ENCODE measurements at regions of chr3 and their contacts with region 1.

Region 1: GRCh38 chr3:195863121-195864006 is 45.0 kb downstream of the TNK2 start:
- DNase-seq: peak; percentile 88 to 95
- ATAC-seq: peak; percentile 86
- H3K4me3 ChIP-seq: peak overlapping the region in 1 of 4 donors; percentile 2
- H3K27ac ChIP-seq: peak overlapping the region; percentile 87 to 93 (median 90)
- H3K4me1 ChIP-seq: peaks cover 10 to 23% of the 10 kb centered on the region in 2 donors
- H3K27me3 ChIP-seq: no peaks in the 10 kb centered on the region
- CTCF ChIP-seq: peak; percentile 97 to 99 (median 98)
- POLR2A ChIP-seq: no peak

Region 2: DNA sequence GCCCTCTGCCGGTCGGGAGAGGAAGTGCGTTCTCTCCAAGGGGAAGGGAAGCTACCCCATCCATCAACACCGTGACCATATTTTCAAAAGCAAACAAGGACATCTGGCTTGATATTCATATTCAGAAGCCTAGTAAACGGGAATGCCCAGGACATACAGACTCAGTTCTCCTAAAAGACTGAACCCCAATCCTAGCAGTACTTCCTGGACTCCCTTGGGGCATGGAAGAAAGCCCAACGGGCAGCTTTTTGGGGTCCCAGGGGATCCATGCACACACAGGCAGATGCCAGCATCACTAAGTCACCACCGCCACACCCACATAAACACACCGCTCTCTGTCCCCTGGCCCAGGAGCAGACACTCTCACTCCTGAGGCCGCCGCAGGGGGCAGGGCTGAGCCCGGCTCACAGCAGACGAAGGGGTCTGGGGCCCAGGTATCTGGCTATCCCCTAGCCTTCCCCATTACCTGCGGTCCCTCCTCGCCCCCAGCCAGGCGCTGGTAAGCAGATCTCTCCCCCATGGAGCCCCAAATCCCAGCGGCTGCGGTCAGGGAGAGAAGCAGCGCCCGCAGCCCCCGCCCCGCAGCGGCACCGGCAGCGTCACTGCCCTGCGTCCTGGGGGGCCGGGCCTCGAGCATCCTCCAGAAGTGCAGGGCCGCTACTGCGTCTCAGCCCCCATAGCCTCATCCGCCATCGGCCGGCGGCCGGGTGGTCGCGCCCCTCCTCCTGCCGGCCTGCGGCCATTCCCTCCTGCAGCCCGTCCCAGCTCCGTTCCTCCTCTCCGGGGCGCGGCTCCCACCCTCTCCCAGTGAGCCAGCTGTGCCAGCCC is 31.6 kb after region 1 on chr3:
- in situ Hi-C with region 1: loop called (anchors 5 kb)
- intact Hi-C with region 1: loop called (anchors 1 kb)
- DNase-seq: peak in 1 of 2 donors; percentile 73
- ATAC-seq: peak; percentile 33 to 49
- H3K4me3 ChIP-seq: peak overlapping the region; percentile 73 to 89 (median 78)
- H3K27ac ChIP-seq: peak overlapping the region; percentile 91 to 99 (median 92)
- H3K4me1 ChIP-seq: peaks cover 71 to 87% of the 10 kb centered on the region in 2 donors
- H3K27me3 ChIP-seq: no peaks in the 10 kb centered on the region
- CTCF ChIP-seq: peak; percentile 94 to 99 (median 95)
- POLR2A ChIP-seq: peak in 1 of 2 donors; percentile 39

Region 3: DNA sequence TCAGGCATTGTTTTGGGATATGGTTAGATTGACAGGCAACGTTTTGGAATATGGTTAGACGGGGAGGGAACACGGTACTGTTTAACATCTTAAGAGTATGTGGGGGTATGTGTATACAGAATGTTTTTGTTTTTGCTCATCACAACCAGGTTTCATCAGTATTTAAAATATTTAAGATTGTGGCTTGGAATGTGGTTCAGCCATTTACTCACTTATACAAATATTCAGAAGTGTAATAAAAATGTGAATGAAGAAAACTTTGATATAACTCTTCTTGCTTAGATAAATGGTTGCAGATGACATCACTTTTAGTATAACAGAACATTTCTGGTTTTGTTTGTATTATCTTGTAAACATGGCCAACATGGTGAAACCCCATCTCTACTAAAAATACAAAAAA is 872.4 kb after region 1 on chr3:
- in situ Hi-C with region 1: no loop called
- intact Hi-C with region 1: no loop called
- DNase-seq: no peak
- ATAC-seq: no peak
- H3K4me3 ChIP-seq: no peak overlapping the region
- H3K27ac ChIP-seq: no peak overlapping the region
- H3K4me1 ChIP-seq: peaks cover 0 to 5% of the 10 kb centered on the region in 2 donors
- H3K27me3 ChIP-seq: no peaks in the 10 kb centered on the region
- CTCF ChIP-seq: no peak
- POLR2A ChIP-seq: no peak

Measured in gastrocnemius medialis (tissue), 4 donors.